Activated CD4-positive, alpha-beta T cell treated with anti-CD3 and anti-CD28 coated beads for 36 hours (primary cell): ENCODE measurements at regions of chr22 and their contacts with region 1.

Region 1: DNA sequence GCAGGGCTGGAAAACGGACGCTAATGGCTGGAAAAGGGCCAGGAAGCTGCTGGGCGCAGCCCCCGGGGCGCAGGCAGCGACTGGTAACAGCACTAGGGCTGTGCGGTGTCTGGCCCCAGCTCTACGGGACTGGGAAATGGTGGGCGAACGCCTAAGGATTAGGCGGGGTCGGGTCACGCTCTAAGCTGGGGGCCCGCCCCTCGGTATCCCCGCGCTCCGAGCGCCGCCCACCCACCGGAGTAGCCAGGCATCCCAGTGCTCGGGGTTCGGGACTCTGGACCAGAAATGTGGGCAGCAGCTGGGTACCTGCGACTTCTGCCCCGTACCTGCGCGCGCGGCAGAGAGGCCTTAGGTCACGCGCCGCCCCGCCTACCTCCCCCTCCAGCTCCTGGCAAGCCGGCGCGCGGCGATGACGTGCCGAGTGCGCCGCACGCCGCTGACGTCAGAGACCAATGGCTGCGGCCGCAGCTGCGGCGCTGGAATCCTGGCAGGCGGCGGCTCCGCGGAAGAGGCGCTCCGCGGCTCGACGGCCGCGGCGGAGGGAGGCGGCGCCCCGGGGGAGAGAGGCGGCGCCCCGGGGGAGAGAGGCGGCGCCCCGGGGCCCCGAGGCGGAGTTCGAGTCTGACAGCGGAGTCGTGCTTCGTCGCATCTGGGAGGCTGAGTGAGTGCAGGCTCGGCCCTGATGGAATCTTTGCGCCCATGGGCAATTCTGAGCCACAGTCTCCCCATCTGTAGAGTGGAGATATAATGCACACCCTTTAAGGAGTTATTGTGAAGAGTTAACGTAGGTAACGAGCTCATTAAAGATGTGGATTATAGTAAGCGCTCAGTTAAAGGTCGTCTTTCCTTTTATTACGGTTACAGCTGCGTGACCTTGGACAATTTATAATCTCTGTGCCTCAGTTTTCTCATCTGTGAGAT is at the starts of genes HPS4 and SRRD:
- DNase-seq: peak; percentile 95
- ATAC-seq: peak; percentile 75
- H3K4me3 Mint-ChIP-seq: peak within 1 kb of the TSS; percentile 82
- H3K27ac Mint-ChIP-seq: peak within 1 kb of the TSS; percentile 95
- H3K4me1 Mint-ChIP-seq: peaks cover 66% of the 10 kb centered on the region
- H3K27me3 Mint-ChIP-seq: no peaks in the 10 kb centered on the region
- total RNA-seq, gene HPS4: 49.3 to 60.9 TPM
- total RNA-seq, gene SRRD: 17.5 to 28.5 TPM

Region 2: GRCh38 chr22:25447686-25448434 is 1035.8 kb before region 1 on chr22:
- CTCF ChIA-PET with region 1: no interaction called
- POLR2A ChIA-PET with region 1: no interaction called
- intact Hi-C with region 1: loop called in 1 of 2 experiments (anchors 2 kb)
- DNase-seq: peak; percentile 93
- ATAC-seq: peak; percentile 93
- H3K4me3 Mint-ChIP-seq: peak overlapping the region; percentile 81
- H3K27ac Mint-ChIP-seq: peak overlapping the region; percentile 94
- H3K4me1 Mint-ChIP-seq: peaks cover 39% of the 10 kb centered on the region
- H3K27me3 Mint-ChIP-seq: no peaks in the 10 kb centered on the region

Region 3: GRCh38 chr22:26345496-26345895 is 138.2 kb before region 1 on chr22:
- CTCF ChIA-PET with region 1: no interaction called
- POLR2A ChIA-PET with region 1: no interaction called
- intact Hi-C with region 1: no loop called
- DNase-seq: no peak
- ATAC-seq: no peak
- H3K4me3 Mint-ChIP-seq: no peak overlapping the region
- H3K27ac Mint-ChIP-seq: no peak overlapping the region
- H3K4me1 Mint-ChIP-seq: no peaks in the 10 kb centered on the region
- H3K27me3 Mint-ChIP-seq: peaks cover 21% of the 10 kb centered on the region

Region 4: GRCh38 chr22:26436903-26437515 is 46.7 kb before region 1 on chr22:
- CTCF ChIA-PET with region 1: interaction called, 3 read pairs
- POLR2A ChIA-PET with region 1: interaction called, 12 read pairs
- intact Hi-C with region 1: no loop called
- DNase-seq: no peak
- ATAC-seq: no peak
- H3K4me3 Mint-ChIP-seq: no peak overlapping the region
- H3K27ac Mint-ChIP-seq: no peak overlapping the region
- H3K4me1 Mint-ChIP-seq: peaks cover 31% of the 10 kb centered on the region
- H3K27me3 Mint-ChIP-seq: no peaks in the 10 kb centered on the region

Region 5: GRCh38 chr22:26511857-26512793 is 28.4 kb after region 1 on chr22 and contains the start of gene TFIP11:
- CTCF ChIA-PET with region 1: interaction called, 6 read pairs
- POLR2A ChIA-PET with region 1: interaction called, 3 read pairs
- intact Hi-C with region 1: loop called (anchors 1 to 2 kb)
- DNase-seq: peak; percentile 97
- ATAC-seq: peak; percentile 98
- H3K4me3 Mint-ChIP-seq: peak within 1 kb of the TSS; percentile 95
- H3K27ac Mint-ChIP-seq: peak within 1 kb of the TSS; percentile 95
- H3K4me1 Mint-ChIP-seq: peaks cover 27% of the 10 kb centered on the region
- H3K27me3 Mint-ChIP-seq: no peaks in the 10 kb centered on the region
- total RNA-seq, gene TFIP11: 36.5 to 41.7 TPM

Region 6: DNA sequence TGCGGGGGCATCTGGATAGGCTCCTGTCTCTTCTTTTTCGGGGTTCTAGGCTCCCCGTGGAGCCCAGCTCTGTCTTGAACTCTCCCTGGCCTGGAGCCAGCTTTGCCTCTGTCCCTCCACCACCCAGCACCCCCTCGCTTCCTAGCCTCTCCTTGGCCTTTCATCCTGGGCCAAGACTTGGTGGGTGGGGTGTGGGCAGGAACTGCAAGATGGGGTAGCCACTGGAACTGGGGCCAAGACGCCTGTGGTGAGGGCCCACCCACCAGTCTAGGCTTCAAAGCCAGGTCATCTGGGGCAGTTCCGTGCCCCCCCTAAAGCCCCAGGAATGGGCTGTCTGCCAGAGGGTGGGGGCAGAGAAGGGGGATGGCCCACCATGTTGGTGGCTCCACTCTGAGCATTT is 135.8 kb after region 1 on chr22:
- CTCF ChIA-PET with region 1: no interaction called
- POLR2A ChIA-PET with region 1: no interaction called
- intact Hi-C with region 1: no loop called
- DNase-seq: no peak
- ATAC-seq: no peak
- H3K4me3 Mint-ChIP-seq: no peak overlapping the region
- H3K27ac Mint-ChIP-seq: no peak overlapping the region
- H3K4me1 Mint-ChIP-seq: no peaks in the 10 kb centered on the region
- H3K27me3 Mint-ChIP-seq: no peaks in the 10 kb centered on the region

Region 7: GRCh38 chr22:26642465-26643417 is 159.0 kb after region 1 on chr22:
- CTCF ChIA-PET with region 1: interaction called, 5 read pairs
- POLR2A ChIA-PET with region 1: no interaction called
- intact Hi-C with region 1: loop called in 1 of 2 experiments (anchors 2 kb)
- DNase-seq: peak; percentile 91
- ATAC-seq: peak; percentile 88
- H3K4me3 Mint-ChIP-seq: peak overlapping the region; percentile 61
- H3K27ac Mint-ChIP-seq: peak overlapping the region; percentile 91
- H3K4me1 Mint-ChIP-seq: peaks cover 62% of the 10 kb centered on the region
- H3K27me3 Mint-ChIP-seq: peaks cover 6% of the 10 kb centered on the region

Region 8: GRCh38 chr22:26804911-26805539 is 321.3 kb after region 1 on chr22:
- CTCF ChIA-PET with region 1: no interaction called
- POLR2A ChIA-PET with region 1: no interaction called
- intact Hi-C with region 1: no loop called
- DNase-seq: no peak
- ATAC-seq: no peak
- H3K4me3 Mint-ChIP-seq: no peak overlapping the region
- H3K27ac Mint-ChIP-seq: no peak overlapping the region
- H3K4me1 Mint-ChIP-seq: no peaks in the 10 kb centered on the region
- H3K27me3 Mint-ChIP-seq: no peaks in the 10 kb centered on the region